ENCODE measurements at regions of chr13 and their contacts with region 1.

Region 1: GRCh38 chr13:24922745-24923591 is 159.0 kb downstream of the RNF17 start:
- DNase-seq: peak; percentile 97 to 99 (median 99)
- ATAC-seq: peak; percentile 100
- H3K4me3 ChIP-seq: peak overlapping the region; percentile 65 to 96 (median 88)
- H3K27ac ChIP-seq: peak overlapping the region; percentile 89 to 100 (median 98)
- H3K4me1 ChIP-seq: peaks cover 0 to 15% (median 5%) of the 10 kb centered on the region in 12 donors
- H3K27me3 ChIP-seq: peaks cover 0 to 4% (median 0%) of the 10 kb centered on the region in 9 donors
- CTCF ChIP-seq: peak in 6 of 12 donors; percentile 12 to 40 (median 22)
- POLR2A ChIP-seq: peak in 1 of 2 donors; percentile 80

Region 2: GRCh38 chr13:24654738-24655137 is 268.2 kb before region 1 on chr13:
- intact Hi-C with region 1: no loop called
- DNase-seq: no peak
- ATAC-seq: no peak
- H3K4me3 ChIP-seq: no peak overlapping the region
- H3K27ac ChIP-seq: no peak overlapping the region
- H3K4me1 ChIP-seq: no peaks in the 10 kb centered on the region
- H3K27me3 ChIP-seq: no peaks in the 10 kb centered on the region
- CTCF ChIP-seq: no peak
- POLR2A ChIP-seq: no peak

Region 3: DNA sequence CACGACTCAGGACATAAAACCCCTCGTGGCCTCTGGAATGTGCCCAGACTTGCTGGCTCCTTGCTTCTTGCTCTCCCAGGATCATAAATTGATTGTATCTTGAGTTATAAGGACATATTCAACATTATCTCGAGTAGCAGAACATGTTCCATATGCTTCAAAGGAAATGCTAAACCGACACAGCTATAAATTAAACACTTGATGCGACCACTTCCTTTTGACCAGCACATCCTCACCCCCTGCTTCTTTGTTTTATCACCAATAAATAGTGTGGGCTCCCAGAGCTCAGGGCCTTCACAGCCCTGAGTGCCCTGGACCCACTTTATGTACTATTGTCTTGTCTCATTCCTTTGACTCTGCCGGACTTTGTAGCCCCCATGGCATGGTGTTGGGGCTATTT is 16.0 kb after region 1 on chr13:
- intact Hi-C with region 1: loop called in 1 of 10 experiments (anchors 1 kb)
- DNase-seq: no peak
- ATAC-seq: no peak
- H3K4me3 ChIP-seq: no peak overlapping the region
- H3K27ac ChIP-seq: no peak overlapping the region
- H3K4me1 ChIP-seq: peaks cover 0 to 4% (median 0%) of the 10 kb centered on the region in 12 donors
- H3K27me3 ChIP-seq: peaks cover 0 to under 1% (median 0%) of the 10 kb centered on the region in 9 donors
- CTCF ChIP-seq: no peak
- POLR2A ChIP-seq: no peak

Region 4: DNA sequence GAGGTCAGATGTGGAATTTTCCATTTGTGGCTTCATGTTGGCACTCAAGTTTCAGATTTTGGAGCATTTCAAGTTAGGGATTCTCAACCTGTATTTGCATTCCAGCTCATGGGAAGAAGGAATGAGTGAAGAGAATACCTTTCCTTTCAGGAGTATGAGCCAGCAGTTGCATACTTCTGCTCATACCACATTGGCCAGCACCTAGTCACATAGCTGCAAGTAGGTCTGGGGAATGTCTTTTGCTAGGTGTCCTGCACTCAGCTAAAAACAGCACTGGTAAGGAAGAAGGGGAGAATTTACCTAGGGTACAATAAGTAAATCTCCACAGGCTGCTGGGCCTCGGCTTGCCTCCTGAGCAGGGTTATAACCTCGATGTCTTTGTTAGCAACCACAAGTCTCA is 424.2 kb after region 1 on chr13:
- intact Hi-C with region 1: no loop called
- DNase-seq: no peak
- ATAC-seq: no peak
- H3K4me3 ChIP-seq: no peak overlapping the region
- H3K27ac ChIP-seq: no peak overlapping the region
- H3K4me1 ChIP-seq: no peaks in the 10 kb centered on the region
- H3K27me3 ChIP-seq: peaks cover 0 to 1% (median 0%) of the 10 kb centered on the region in 9 donors
- CTCF ChIP-seq: no peak
- POLR2A ChIP-seq: no peak